ENCODE measurements at regions of chr1 and their contacts with region 1.

Region 1: GRCh38 chr1:150629115-150629928 is at the start of gene ENSA:
- DNase-seq: peak; percentile 88 to 100 (median 94)
- ATAC-seq: peak; percentile 84
- H3K4me3 ChIP-seq: peak within 1 kb of the TSS; percentile 79 to 90
- H3K4me3 Mint-ChIP-seq: no peak within 1 kb of the TSS
- H3K27ac ChIP-seq: peak within 1 kb of the TSS; percentile 94 to 100
- H3K27ac Mint-ChIP-seq: no peak within 1 kb of the TSS
- H3K4me1 ChIP-seq: peaks cover 17% of the 10 kb centered on the region
- H3K4me1 Mint-ChIP-seq: peaks cover 15% of the 10 kb centered on the region
- H3K27me3 ChIP-seq: no peaks in the 10 kb centered on the region
- H3K27me3 Mint-ChIP-seq: no peaks in the 10 kb centered on the region
- CTCF ChIP-seq: no peak
- total RNA-seq, gene ENSA: 140 to 141 TPM

Region 2: GRCh38 chr1:150076066-150076465 is 553.3 kb before region 1 on chr1:
- CTCF ChIA-PET with region 1: no interaction called
- POLR2A ChIA-PET with region 1: no interaction called
- intact Hi-C with region 1: no loop called
- DNase-seq: peak in 1 of 9 experiments; percentile 30
- ATAC-seq: no peak
- H3K4me3 ChIP-seq: no peak overlapping the region
- H3K4me3 Mint-ChIP-seq: no peak overlapping the region
- H3K27ac ChIP-seq: no peak overlapping the region
- H3K27ac Mint-ChIP-seq: no peak overlapping the region
- H3K4me1 ChIP-seq: no peaks in the 10 kb centered on the region
- H3K4me1 Mint-ChIP-seq: peaks cover 8% of the 10 kb centered on the region
- H3K27me3 ChIP-seq: no peaks in the 10 kb centered on the region
- H3K27me3 Mint-ChIP-seq: no peaks in the 10 kb centered on the region
- CTCF ChIP-seq: no peak

Region 3: DNA sequence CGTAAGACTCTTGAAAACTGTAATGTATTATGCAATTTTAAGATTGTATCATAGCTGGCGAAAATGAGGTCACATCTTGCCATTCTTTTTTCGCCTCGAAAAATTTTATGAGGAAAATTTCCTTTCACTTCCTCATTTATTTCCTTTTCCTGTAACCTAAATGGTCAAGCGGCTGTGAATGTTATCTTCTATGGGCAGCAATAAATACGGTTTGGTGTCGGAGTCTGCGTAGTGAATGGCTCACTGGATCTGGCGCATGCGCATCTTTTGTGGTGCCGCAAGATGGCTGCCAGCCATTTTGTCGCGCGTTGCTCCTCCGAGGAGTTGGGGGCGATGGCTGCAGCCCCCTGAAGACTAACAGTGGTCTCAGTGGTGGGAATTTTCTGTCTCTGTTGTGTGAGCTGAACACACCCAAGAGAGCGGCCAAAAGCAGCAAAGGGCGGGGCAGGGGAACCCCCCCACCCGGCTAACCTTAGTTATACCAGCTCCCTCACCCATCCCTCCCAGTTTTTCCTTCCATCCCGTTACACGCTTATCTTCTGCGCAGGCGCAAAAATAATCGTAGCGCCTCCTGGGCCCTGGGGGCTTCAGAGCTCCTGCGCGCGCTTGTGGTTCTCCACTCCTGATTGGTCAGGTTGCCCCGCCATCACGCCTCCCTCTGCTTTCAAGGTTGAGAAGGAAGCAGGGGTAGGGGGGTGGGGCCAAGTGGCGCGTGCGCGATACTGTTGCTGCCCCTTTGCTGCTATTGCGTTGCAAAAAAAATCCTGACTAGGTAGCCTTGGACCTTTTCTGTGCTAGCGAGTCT is 265.7 kb before region 1 on chr1 and contains the start of gene RPRD2:
- CTCF ChIA-PET with region 1: no interaction called
- POLR2A ChIA-PET with region 1: interaction called, 6 read pairs
- intact Hi-C with region 1: loop called in 1 of 2 experiments (anchors 10 kb)
- DNase-seq: peak; percentile 97 to 100 (median 98)
- ATAC-seq: peak; percentile 95
- H3K4me3 ChIP-seq: peak within 1 kb of the TSS; percentile 69 to 90
- H3K4me3 Mint-ChIP-seq: peak within 1 kb of the TSS; percentile 99
- H3K27ac ChIP-seq: peak within 1 kb of the TSS; percentile 74 to 94
- H3K27ac Mint-ChIP-seq: peak within 1 kb of the TSS; percentile 99
- H3K4me1 ChIP-seq: peaks cover 7% of the 10 kb centered on the region
- H3K4me1 Mint-ChIP-seq: peaks cover 36% of the 10 kb centered on the region
- H3K27me3 ChIP-seq: no peaks in the 10 kb centered on the region
- H3K27me3 Mint-ChIP-seq: no peaks in the 10 kb centered on the region
- CTCF ChIP-seq: no peak
- total RNA-seq, gene RPRD2: 31.8 to 35.0 TPM

Region 4: GRCh38 chr1:150515328-150516048 is 113.8 kb before region 1 on chr1 and contains the start of gene FALEC:
- CTCF ChIA-PET with region 1: no interaction called
- POLR2A ChIA-PET with region 1: interaction called, 10 read pairs
- intact Hi-C with region 1: loop called (anchors 1 kb)
- DNase-seq: peak; percentile 76 to 95 (median 89)
- ATAC-seq: peak; percentile 98
- H3K4me3 ChIP-seq: peak within 1 kb of the TSS; percentile 68 to 89
- H3K4me3 Mint-ChIP-seq: peak within 1 kb of the TSS; percentile 89
- H3K27ac ChIP-seq: peak within 1 kb of the TSS; percentile 13 to 63
- H3K27ac Mint-ChIP-seq: peak within 1 kb of the TSS; percentile 79
- H3K4me1 ChIP-seq: peaks cover 3% of the 10 kb centered on the region
- H3K4me1 Mint-ChIP-seq: peaks cover 16% of the 10 kb centered on the region
- H3K27me3 ChIP-seq: no peaks in the 10 kb centered on the region
- H3K27me3 Mint-ChIP-seq: no peaks in the 10 kb centered on the region
- CTCF ChIP-seq: no peak
- total RNA-seq, gene FALEC: not detected

Region 5: GRCh38 chr1:150578965-150579798 is 50.1 kb before region 1 on chr1 and contains the start of gene MCL1:
- CTCF ChIA-PET with region 1: interaction called, 799 read pairs
- POLR2A ChIA-PET with region 1: interaction called, 35 read pairs
- intact Hi-C with region 1: loop called (anchors 1 to 2 kb)
- DNase-seq: peak; percentile 66 to 94 (median 88)
- ATAC-seq: peak; percentile 69
- H3K4me3 ChIP-seq: peak within 1 kb of the TSS; percentile 88 to 94
- H3K4me3 Mint-ChIP-seq: peak within 1 kb of the TSS; percentile 96
- H3K27ac ChIP-seq: peak within 1 kb of the TSS; percentile 90 to 97
- H3K27ac Mint-ChIP-seq: peak within 1 kb of the TSS; percentile 98
- H3K4me1 ChIP-seq: peaks cover 7% of the 10 kb centered on the region
- H3K4me1 Mint-ChIP-seq: peaks cover 37% of the 10 kb centered on the region
- H3K27me3 ChIP-seq: no peaks in the 10 kb centered on the region
- H3K27me3 Mint-ChIP-seq: no peaks in the 10 kb centered on the region
- CTCF ChIP-seq: no peak
- total RNA-seq, gene MCL1: 682 to 685 TPM

Region 6: DNA sequence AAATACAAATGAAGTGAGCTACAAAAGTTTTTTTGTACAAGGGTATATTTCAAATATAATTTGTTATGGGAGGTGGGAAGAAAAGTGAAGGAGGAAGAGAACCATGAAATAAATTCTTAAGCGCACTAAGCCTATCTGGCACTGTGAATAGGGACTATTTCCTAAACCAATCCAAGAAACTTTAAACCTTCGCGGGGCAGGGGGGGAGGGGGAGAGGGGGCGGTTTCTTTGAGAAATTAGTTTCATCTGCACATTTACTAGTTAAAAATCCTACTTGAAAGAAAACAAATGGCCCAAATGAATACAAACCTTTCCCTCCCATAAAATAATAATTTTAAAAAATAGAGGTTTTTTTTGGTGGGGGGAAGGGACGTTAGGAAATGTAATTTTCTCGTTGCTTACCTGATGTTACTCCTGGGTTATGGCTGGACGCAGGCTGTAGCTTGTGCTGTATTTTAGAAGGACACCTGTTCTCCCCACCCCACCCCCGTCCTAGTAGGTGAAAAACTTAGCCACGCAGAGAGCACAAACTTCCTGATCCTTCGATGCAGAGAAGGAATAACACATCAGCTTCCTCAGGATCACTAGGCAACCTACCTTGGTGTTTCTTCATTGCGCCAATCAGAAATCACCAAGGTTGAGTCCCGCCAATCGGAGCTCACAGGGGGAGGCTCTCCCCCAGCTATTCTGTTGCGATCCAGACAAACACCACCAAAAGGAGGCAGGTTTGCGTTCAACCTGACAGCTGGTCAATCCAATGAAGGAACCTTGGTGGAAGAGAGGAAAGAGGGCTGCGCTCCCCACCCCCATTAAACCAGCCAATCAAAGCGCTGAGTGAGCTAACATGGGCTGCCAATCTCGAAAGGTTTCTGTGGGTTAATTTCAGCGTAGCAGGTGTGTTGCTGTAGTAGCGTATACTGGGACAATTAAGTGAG is 67.5 kb after region 1 on chr1 and contains the start of gene GOLPH3L:
- CTCF ChIA-PET with region 1: no interaction called
- POLR2A ChIA-PET with region 1: interaction called, 4 read pairs
- intact Hi-C with region 1: loop called (anchors 2 kb)
- DNase-seq: peak; percentile 76 to 97 (median 88)
- ATAC-seq: peak; percentile 98
- H3K4me3 ChIP-seq: peak within 1 kb of the TSS; percentile 81 to 88
- H3K4me3 Mint-ChIP-seq: peak within 1 kb of the TSS; percentile 98
- H3K27ac ChIP-seq: peak within 1 kb of the TSS; percentile 70 to 81
- H3K27ac Mint-ChIP-seq: peak within 1 kb of the TSS; percentile 92
- H3K4me1 ChIP-seq: peaks cover 7% of the 10 kb centered on the region
- H3K4me1 Mint-ChIP-seq: peaks cover 38% of the 10 kb centered on the region
- H3K27me3 ChIP-seq: no peaks in the 10 kb centered on the region
- H3K27me3 Mint-ChIP-seq: peaks cover 2% of the 10 kb centered on the region
- CTCF ChIP-seq: no peak
- total RNA-seq, gene GOLPH3L: 1.6 to 1.8 TPM

Region 7: GRCh38 chr1:150925816-150926741 is 296.8 kb after region 1 on chr1 and contains the start of gene SETDB1:
- CTCF ChIA-PET with region 1: no interaction called
- POLR2A ChIA-PET with region 1: no interaction called
- intact Hi-C with region 1: loop called in 1 of 2 experiments (anchors 5 kb)
- DNase-seq: peak; percentile 84 to 98 (median 91)
- ATAC-seq: peak; percentile 96
- H3K4me3 ChIP-seq: peak within 1 kb of the TSS; percentile 91 to 93
- H3K4me3 Mint-ChIP-seq: peak within 1 kb of the TSS; percentile 94
- H3K27ac ChIP-seq: peak within 1 kb of the TSS; percentile 79 to 93
- H3K27ac Mint-ChIP-seq: peak within 1 kb of the TSS; percentile 93
- H3K4me1 ChIP-seq: peaks cover 17% of the 10 kb centered on the region
- H3K4me1 Mint-ChIP-seq: peaks cover 31% of the 10 kb centered on the region
- H3K27me3 ChIP-seq: no peaks in the 10 kb centered on the region
- H3K27me3 Mint-ChIP-seq: no peaks in the 10 kb centered on the region
- CTCF ChIP-seq: no peak
- total RNA-seq, gene SETDB1: 44.1 to 47.4 TPM